ENCODE measurements at regions of chr1 and their contacts with region 1.

Region 1: GRCh38 chr1:146036965-146037646 is 15.6 kb upstream of the HJV start:
- DNase-seq: peak; percentile 81
- H3K4me3 Mint-ChIP-seq: peak overlapping the region; percentile 94
- H3K27ac Mint-ChIP-seq: peak overlapping the region; percentile 98
- H3K4me1 Mint-ChIP-seq: peaks cover 45% of the 10 kb centered on the region
- H3K27me3 Mint-ChIP-seq: peaks cover 13% of the 10 kb centered on the region

Region 2: DNA sequence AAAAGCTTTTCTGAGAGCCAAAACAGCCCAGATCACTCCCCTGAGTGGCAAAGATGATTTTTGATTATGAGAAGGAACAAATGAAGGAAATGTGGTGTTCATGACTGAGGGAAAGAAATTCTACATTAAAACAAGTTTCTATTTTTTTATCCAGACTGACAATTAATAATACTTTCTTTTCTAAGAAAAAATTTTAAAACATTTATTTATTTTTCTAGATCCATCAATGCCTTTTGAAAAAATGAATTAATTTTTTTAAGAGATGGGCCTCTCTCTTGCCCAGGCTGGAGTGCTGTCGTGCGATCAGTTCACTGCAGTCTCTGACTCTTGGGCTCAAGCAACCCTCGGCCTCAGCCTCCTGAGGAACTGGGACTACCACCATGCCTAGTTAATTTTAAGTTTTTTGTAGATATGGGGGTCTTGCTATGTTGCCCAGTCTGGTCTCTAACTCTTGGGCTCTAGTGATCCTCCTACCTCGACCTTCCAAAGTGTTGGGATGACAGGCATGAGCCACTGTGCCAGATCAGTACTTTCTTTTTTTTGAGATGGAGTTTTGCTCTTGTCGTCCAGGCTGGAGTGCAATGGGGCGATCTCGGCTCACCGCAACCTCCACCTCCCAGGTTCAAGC is 29.5 kb before region 1 on chr1:
- CTCF ChIA-PET with region 1: interaction called, 11 read pairs
- POLR2A ChIA-PET with region 1: no interaction called
- DNase-seq: no peak
- H3K4me3 Mint-ChIP-seq: no peak overlapping the region
- H3K27ac Mint-ChIP-seq: peak overlapping the region; percentile 81
- H3K4me1 Mint-ChIP-seq: peaks cover 45% of the 10 kb centered on the region
- H3K27me3 Mint-ChIP-seq: no peaks in the 10 kb centered on the region

Region 3: GRCh38 chr1:146049436-146049835 is 12.3 kb after region 1 on chr1:
- CTCF ChIA-PET with region 1: interaction called, 15 read pairs
- POLR2A ChIA-PET with region 1: interaction called, 27 read pairs
- DNase-seq: no peak
- H3K4me3 Mint-ChIP-seq: no peak overlapping the region
- H3K27ac Mint-ChIP-seq: no peak overlapping the region
- H3K4me1 Mint-ChIP-seq: peaks cover 39% of the 10 kb centered on the region
- H3K27me3 Mint-ChIP-seq: no peaks in the 10 kb centered on the region